CD4-positive, alpha-beta memory T cell (primary cell): ENCODE measurements at regions of chr14 and their contacts with region 1.

Region 1: DNA sequence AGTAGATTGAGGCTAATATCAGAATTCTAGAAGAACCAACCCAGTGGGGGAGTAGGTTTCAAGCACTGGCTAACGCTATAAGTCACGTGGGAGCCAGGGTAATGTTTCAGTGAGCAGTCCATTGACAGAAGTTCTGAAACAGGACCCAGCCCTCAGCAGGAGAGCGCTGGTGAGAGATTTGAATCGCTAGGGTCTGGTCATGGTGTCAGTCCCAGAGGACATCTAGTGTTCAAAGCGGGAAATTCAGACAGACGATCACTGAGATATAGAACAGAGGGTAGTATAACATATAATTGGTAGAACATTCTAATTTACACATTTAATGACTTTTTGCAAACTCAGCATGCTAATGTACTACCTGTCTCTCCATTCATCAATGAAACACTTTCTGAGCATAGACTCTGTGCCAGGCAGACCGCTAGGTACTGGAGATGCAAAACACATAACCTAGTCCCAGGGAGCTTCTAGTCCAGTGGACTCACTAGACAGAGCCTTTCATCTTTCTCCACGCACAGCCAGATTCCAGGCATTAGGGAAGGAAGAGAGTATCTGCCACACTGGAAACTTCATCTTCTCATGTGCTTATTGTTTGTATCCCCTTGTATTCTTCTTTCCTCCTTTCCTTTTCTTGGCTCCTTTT is 35.4 kb upstream of the RNASE3 start:
- DNase-seq: peak; percentile 47 to 62 (median 57)
- H3K4me3 ChIP-seq: no peak overlapping the region
- H3K4me3 Mint-ChIP-seq: no peak overlapping the region
- H3K27ac ChIP-seq: no peak overlapping the region
- H3K27ac Mint-ChIP-seq: no peak overlapping the region
- H3K4me1 ChIP-seq: no peaks in the 10 kb centered on the region
- H3K4me1 Mint-ChIP-seq: peaks cover 0 to 8% (median 4%) of the 10 kb centered on the region in 4 donors
- H3K27me3 ChIP-seq: peaks cover 3% of the 10 kb centered on the region
- H3K27me3 Mint-ChIP-seq: peaks cover 16 to 17% of the 10 kb centered on the region in 2 donors

Region 2: DNA sequence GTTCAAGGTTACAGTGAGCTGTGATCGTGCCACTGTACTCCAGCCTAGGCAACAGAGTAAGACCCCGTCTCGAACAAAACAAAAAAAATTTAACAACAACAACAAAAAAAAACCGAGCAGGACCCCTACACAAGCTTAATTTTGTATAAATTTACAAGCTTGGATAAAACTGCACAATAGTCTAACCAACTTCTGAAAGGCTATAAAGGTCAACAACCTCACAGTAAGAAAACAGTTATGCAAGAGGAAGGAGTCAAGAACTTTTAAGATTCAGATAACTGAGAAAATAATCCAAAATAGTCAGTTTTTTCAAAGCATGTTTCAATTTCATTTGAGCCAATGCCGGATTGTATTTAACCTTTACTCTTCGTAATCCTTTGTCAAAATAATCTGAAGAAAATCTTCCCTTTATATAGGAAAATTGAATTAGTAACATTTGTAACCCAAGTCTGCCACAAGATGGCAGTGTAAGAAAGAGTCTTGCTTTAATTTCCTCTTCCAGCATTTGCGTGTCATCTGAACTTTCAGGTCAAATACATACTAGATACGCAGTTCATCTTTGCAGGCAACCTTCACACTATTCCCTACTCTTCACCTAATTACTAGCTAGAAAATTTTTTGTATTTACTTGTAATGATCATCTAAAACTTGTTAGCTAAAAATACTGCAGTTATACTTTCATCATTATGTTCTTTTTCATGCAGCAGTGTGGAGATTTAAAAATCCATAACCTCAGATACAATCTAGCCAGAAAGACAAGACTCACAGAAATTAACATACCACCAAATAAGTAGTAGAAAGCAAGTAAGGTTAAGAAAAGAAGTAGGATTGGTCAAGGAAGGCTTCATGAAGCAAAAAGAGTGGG is 528.5 kb before region 1 on chr14:
- CTCF ChIA-PET with region 1: interaction called, 3 read pairs
- POLR2A ChIA-PET with region 1: no interaction called
- intact Hi-C with region 1: loop called (anchors 10 kb)
- DNase-seq: peak in 4 of 5 donors; percentile 65 to 68 (median 66)
- H3K4me3 ChIP-seq: no peak overlapping the region
- H3K4me3 Mint-ChIP-seq: peak overlapping the region in 3 of 8 donors; percentile 17 to 50 (median 45)
- H3K27ac ChIP-seq: peak overlapping the region; percentile 17
- H3K27ac Mint-ChIP-seq: peak overlapping the region; percentile 24 to 92 (median 77)
- H3K4me1 ChIP-seq: peaks cover 10% of the 10 kb centered on the region
- H3K4me1 Mint-ChIP-seq: peaks cover 15 to 35% (median 22%) of the 10 kb centered on the region in 4 donors
- H3K27me3 ChIP-seq: no peaks in the 10 kb centered on the region
- H3K27me3 Mint-ChIP-seq: no peaks in the 10 kb centered on the region

Region 3: GRCh38 chr14:20690848-20691523 is 164.8 kb before region 1 on chr14:
- CTCF ChIA-PET with region 1: interaction called, 64 read pairs
- POLR2A ChIA-PET with region 1: no interaction called
- intact Hi-C with region 1: no loop called
- DNase-seq: peak; percentile 55 to 69 (median 65)
- H3K4me3 ChIP-seq: no peak overlapping the region
- H3K4me3 Mint-ChIP-seq: no peak overlapping the region
- H3K27ac ChIP-seq: no peak overlapping the region
- H3K27ac Mint-ChIP-seq: peak overlapping the region in 1 of 7 donors; percentile 3
- H3K4me1 ChIP-seq: no peaks in the 10 kb centered on the region
- H3K4me1 Mint-ChIP-seq: peaks cover 5 to 6% (median 6%) of the 10 kb centered on the region in 4 donors
- H3K27me3 ChIP-seq: no peaks in the 10 kb centered on the region
- H3K27me3 Mint-ChIP-seq: no peaks in the 10 kb centered on the region

Region 4: DNA sequence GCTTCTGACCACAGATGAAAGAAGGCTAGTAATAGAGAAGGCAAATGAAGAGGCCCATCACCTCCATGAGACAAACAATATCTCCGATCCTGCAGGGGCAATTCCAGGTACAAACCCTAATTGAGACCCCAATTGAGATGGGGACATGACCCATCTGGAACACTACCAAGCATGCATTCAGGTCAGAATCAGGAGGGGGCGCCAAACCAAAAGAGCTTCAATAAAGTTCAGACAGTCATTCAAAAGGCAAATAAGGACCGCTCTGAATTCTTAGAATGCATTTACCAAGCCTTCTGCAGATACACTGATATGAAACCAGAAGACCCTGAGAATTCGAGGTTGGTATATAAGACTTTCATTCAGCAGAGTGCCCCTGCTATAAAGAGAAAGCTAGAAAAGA is 97.8 kb before region 1 on chr14:
- CTCF ChIA-PET with region 1: interaction called, 13 read pairs
- POLR2A ChIA-PET with region 1: no interaction called
- intact Hi-C with region 1: loop called (anchors 1 kb)
- DNase-seq: peak in 4 of 5 donors; percentile 16 to 34 (median 26)
- H3K4me3 ChIP-seq: no peak overlapping the region
- H3K4me3 Mint-ChIP-seq: no peak overlapping the region
- H3K27ac ChIP-seq: no peak overlapping the region
- H3K27ac Mint-ChIP-seq: no peak overlapping the region
- H3K4me1 ChIP-seq: no peaks in the 10 kb centered on the region
- H3K4me1 Mint-ChIP-seq: no peaks in the 10 kb centered on the region
- H3K27me3 ChIP-seq: no peaks in the 10 kb centered on the region
- H3K27me3 Mint-ChIP-seq: peaks cover 0 to 2% of the 10 kb centered on the region in 2 donors

Region 5: DNA sequence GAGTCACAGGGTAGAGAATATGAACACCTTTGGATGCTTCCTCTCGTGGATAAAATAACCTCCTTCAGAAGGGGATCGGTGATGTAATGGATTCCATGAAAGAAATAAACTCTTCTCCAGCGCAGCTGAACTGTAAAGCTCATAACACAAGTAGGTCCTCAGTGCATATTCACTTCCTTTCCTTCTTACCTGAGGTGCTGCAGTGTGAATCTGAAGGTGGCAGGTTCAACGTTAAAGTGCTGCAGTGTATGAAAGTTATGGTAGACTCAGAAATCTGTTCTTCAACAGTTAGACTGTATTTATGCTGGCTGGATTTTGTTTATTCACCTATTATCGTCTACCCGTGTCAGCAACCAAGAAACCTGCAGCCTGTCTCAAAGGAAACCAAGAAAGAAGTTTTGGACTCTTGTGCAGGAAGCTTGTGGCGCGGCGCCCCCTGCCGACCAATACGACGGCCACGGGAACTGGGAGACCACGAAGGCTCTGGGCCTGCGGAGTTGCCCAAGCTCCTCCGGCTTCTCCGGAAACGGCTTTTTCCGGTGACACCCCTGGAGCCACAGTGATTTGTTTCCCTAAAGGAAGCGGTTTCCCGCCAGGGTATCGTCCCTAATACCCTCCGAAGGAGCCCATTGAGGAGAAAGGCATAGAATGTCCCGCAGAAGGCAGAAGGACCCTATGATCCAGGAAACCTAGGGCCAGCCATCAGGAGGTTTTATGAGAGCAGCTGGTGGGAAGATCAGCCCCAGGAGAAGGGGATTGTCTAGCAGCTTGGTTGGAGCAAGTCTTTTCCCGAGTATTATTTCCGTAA is 17.8 kb after region 1 on chr14:
- CTCF ChIA-PET with region 1: interaction called, 57 read pairs
- POLR2A ChIA-PET with region 1: no interaction called
- intact Hi-C with region 1: loop called (anchors 1 kb)
- DNase-seq: peak; percentile 63 to 70 (median 66)
- H3K4me3 ChIP-seq: no peak overlapping the region
- H3K4me3 Mint-ChIP-seq: peak overlapping the region in 4 of 8 donors; percentile 17 to 60 (median 20)
- H3K27ac ChIP-seq: no peak overlapping the region
- H3K27ac Mint-ChIP-seq: peak overlapping the region in 1 of 7 donors; percentile 13
- H3K4me1 ChIP-seq: peaks cover 11% of the 10 kb centered on the region
- H3K4me1 Mint-ChIP-seq: peaks cover 5 to 16% (median 8%) of the 10 kb centered on the region in 4 donors
- H3K27me3 ChIP-seq: peaks cover 4% of the 10 kb centered on the region
- H3K27me3 Mint-ChIP-seq: peaks cover 6 to 12% of the 10 kb centered on the region in 2 donors

Region 6: DNA sequence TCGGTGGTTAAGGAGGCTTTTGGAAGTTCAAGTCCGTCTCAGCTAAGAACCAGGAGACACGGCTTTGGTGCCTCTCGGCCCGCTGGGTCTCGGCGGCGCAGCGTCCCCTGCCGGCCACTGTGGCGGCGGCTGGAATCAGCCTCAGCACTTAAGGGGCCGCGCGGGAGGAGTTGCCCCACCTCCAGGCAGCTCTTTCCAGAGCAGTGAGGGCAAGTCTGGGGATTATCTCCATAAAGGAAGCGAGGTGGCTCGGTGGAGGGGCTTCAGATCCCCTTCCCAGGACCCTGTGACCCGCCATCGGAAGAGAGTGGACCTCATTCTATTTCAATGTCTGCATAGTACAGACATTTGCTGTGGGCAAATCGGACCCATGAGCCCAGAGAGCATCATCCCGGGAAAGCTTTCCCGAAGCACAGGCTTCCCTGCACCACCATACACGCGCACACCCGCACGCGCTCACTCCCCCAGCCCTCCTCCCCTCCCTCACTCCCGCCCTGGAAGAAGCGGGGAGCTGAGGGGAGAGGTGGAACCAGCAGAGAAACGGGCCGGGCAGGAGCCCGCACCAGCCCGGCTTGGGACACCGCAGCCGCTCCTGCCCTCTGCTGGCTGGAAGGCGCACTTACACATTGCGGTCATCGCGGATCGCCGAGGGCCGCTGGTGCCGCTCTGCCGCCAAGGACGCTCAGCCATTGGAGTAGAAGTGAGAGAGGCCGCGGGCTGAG is 115.4 kb after region 1 on chr14:
- CTCF ChIA-PET with region 1: interaction called, 64 read pairs
- POLR2A ChIA-PET with region 1: interaction called, 5 read pairs
- intact Hi-C with region 1: loop called (anchors 1 kb)
- DNase-seq: peak; percentile 72 to 79 (median 76)
- H3K4me3 ChIP-seq: peak overlapping the region; percentile 68 to 79
- H3K4me3 Mint-ChIP-seq: peak overlapping the region; percentile 88 to 95 (median 91)
- H3K27ac ChIP-seq: peak overlapping the region; percentile 3
- H3K27ac Mint-ChIP-seq: peak overlapping the region; percentile 51 to 93 (median 81)
- H3K4me1 ChIP-seq: peaks cover 15% of the 10 kb centered on the region
- H3K4me1 Mint-ChIP-seq: peaks cover 3 to 14% (median 10%) of the 10 kb centered on the region in 4 donors
- H3K27me3 ChIP-seq: no peaks in the 10 kb centered on the region
- H3K27me3 Mint-ChIP-seq: peaks cover 11 to 12% of the 10 kb centered on the region in 2 donors

Region 7: DNA sequence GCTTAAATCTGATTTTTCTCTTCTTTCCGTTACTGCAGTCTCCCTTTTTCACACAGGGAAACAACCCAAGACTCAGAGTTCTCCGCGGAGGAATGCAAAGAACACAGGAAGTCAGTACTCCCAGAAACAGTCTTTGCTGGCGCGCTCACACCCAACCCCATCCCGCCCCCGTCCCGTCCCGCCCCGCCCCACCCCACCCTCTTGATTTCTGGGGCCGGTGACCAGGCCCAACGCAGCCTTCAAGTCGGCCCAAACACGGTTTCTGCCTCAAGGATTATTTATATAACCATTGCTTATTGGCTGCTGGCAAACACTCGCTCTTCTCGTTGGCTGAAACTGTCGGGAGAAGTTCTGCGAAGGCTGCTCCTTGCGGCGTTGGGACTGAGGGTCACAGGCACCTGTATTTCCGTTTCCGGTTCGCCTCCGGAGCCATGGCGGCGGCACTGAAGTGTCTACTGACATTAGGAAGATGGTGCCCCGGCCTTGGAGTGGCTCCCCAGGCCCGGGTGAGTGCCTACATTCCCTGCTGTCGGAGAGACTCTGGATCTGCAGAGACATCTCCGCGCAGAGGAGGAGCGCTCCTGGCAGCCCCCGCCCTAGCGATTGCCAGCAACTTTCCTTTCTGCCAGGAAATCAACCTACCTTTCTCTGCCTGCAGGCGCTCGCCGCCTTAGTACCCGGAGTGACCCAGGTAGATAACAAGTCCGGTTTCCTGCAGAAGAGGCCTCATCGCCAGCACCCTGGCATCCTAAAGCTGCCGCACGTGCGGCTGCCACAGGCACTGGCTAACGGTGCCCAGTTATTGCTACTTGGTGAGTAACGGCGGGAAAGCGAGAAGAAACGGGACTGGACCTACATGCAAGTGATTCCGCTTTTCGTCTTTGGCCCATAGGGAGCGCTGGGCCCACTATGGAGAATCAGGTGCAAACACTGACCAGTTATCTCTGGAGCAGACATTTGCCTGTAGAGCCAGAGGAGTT is 134.1 kb after region 1 on chr14 and contains the start of gene METTL17:
- CTCF ChIA-PET with region 1: no interaction called
- POLR2A ChIA-PET with region 1: no interaction called
- intact Hi-C with region 1: no loop called
- DNase-seq: peak; percentile 82 to 90 (median 85)
- H3K4me3 ChIP-seq: peak within 1 kb of the TSS; percentile 79 to 93
- H3K4me3 Mint-ChIP-seq: peak within 1 kb of the TSS; percentile 90 to 97 (median 96)
- H3K27ac ChIP-seq: peak within 1 kb of the TSS; percentile 73
- H3K27ac Mint-ChIP-seq: peak within 1 kb of the TSS; percentile 87 to 98 (median 96)
- H3K4me1 ChIP-seq: peaks cover 24% of the 10 kb centered on the region
- H3K4me1 Mint-ChIP-seq: peaks cover 15 to 39% (median 22%) of the 10 kb centered on the region in 4 donors
- H3K27me3 ChIP-seq: no peaks in the 10 kb centered on the region
- H3K27me3 Mint-ChIP-seq: no peaks in the 10 kb centered on the region
- total RNA-seq, gene METTL17: 119 to 125 TPM

Region 8: GRCh38 chr14:21123429-21123828 is 267.7 kb after region 1 on chr14:
- CTCF ChIA-PET with region 1: no interaction called
- POLR2A ChIA-PET with region 1: no interaction called
- intact Hi-C with region 1: no loop called
- DNase-seq: no peak
- H3K4me3 ChIP-seq: no peak overlapping the region
- H3K4me3 Mint-ChIP-seq: no peak overlapping the region
- H3K27ac ChIP-seq: no peak overlapping the region
- H3K27ac Mint-ChIP-seq: no peak overlapping the region
- H3K4me1 ChIP-seq: no peaks in the 10 kb centered on the region
- H3K4me1 Mint-ChIP-seq: no peaks in the 10 kb centered on the region
- H3K27me3 ChIP-seq: no peaks in the 10 kb centered on the region
- H3K27me3 Mint-ChIP-seq: peaks cover 19 to 24% of the 10 kb centered on the region in 2 donors